ENCODE measurements at regions of chr11 and their contacts with region 1.

Region 1: GRCh38 chr11:6362873-6363678 is 27.2 kb upstream of the SMPD1 start:
- DNase-seq: peak; percentile 75 to 92 (median 87)
- H3K4me3 ChIP-seq: no peak overlapping the region
- H3K27ac ChIP-seq: no peak overlapping the region
- H3K4me1 ChIP-seq: no peaks in the 10 kb centered on the region
- H3K27me3 ChIP-seq: no peaks in the 10 kb centered on the region
- CTCF ChIP-seq: peak; percentile 70 to 87 (median 80)
- POLR2A ChIP-seq: no peak

Region 2: DNA sequence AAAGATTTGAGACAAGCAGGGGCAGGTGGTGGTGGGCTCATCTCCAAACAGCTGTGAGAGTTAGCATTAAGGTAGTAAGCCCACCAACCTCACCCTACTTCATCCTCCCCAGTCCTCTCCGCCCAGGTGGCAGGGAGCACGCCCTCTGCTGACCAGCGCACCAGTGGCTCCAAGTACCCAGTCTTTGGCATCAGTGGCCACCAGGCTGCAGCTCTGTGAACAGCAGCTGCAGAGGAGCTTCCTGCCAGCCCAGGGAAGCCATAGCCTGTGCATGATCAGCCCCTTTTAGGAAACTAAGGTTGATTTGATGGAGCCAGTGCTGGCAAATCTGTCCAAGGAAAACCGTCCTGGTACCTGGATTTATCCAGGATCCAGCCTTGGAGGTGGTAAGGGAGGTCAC is 64.5 kb before region 1 on chr11:
- intact Hi-C with region 1: loop called in 1 of 2 experiments (anchors 2 kb)
- DNase-seq: peak in 6 of 7 donors; percentile 22 to 47 (median 34)
- H3K4me3 ChIP-seq: no peak overlapping the region
- H3K27ac ChIP-seq: no peak overlapping the region
- H3K4me1 ChIP-seq: no peaks in the 10 kb centered on the region
- H3K27me3 ChIP-seq: no peaks in the 10 kb centered on the region
- CTCF ChIP-seq: peak; percentile 13 to 53 (median 45)
- POLR2A ChIP-seq: no peak

Region 3: GRCh38 chr11:6735306-6735705 is 372.2 kb after region 1 on chr11:
- intact Hi-C with region 1: no loop called
- DNase-seq: no peak
- H3K4me3 ChIP-seq: no peak overlapping the region
- H3K27ac ChIP-seq: no peak overlapping the region
- H3K4me1 ChIP-seq: no peaks in the 10 kb centered on the region
- H3K27me3 ChIP-seq: no peaks in the 10 kb centered on the region
- CTCF ChIP-seq: no peak
- POLR2A ChIP-seq: no peak